Ovary (tissue), 10 donors: ENCODE measurements at regions of chr17 and their contacts with region 1.

Region 1: GRCh38 chr17:2416010-2416734 is 15.3 kb upstream of the MNT start:
- DNase-seq: peak; percentile 84 to 95 (median 95)
- H3K4me3 ChIP-seq: no peak overlapping the region
- H3K27ac ChIP-seq: no peak overlapping the region
- H3K4me1 ChIP-seq: peaks cover 11% of the 10 kb centered on the region
- H3K27me3 ChIP-seq: no peaks in the 10 kb centered on the region
- CTCF ChIP-seq: peak; percentile 93
- EP300 ChIP-seq: no peak
- POLR2A ChIP-seq: no peak

Region 2: GRCh38 chr17:2369551-2370210 is 46.5 kb before region 1 on chr17:
- intact Hi-C with region 1: loop called in 1 of 4 experiments (anchors 10 kb)
- DNase-seq: no peak
- H3K4me3 ChIP-seq: no peak overlapping the region
- H3K27ac ChIP-seq: no peak overlapping the region
- H3K4me1 ChIP-seq: no peaks in the 10 kb centered on the region
- H3K27me3 ChIP-seq: no peaks in the 10 kb centered on the region
- CTCF ChIP-seq: no peak
- EP300 ChIP-seq: no peak
- POLR2A ChIP-seq: no peak

Region 3: GRCh38 chr17:2380226-2380922 is 35.8 kb before region 1 on chr17:
- intact Hi-C with region 1: loop called (anchors 1 to 5 kb)
- DNase-seq: no peak
- H3K4me3 ChIP-seq: no peak overlapping the region
- H3K27ac ChIP-seq: no peak overlapping the region
- H3K4me1 ChIP-seq: peaks cover 8% of the 10 kb centered on the region
- H3K27me3 ChIP-seq: no peaks in the 10 kb centered on the region
- CTCF ChIP-seq: no peak
- EP300 ChIP-seq: no peak
- POLR2A ChIP-seq: no peak

Region 4: DNA sequence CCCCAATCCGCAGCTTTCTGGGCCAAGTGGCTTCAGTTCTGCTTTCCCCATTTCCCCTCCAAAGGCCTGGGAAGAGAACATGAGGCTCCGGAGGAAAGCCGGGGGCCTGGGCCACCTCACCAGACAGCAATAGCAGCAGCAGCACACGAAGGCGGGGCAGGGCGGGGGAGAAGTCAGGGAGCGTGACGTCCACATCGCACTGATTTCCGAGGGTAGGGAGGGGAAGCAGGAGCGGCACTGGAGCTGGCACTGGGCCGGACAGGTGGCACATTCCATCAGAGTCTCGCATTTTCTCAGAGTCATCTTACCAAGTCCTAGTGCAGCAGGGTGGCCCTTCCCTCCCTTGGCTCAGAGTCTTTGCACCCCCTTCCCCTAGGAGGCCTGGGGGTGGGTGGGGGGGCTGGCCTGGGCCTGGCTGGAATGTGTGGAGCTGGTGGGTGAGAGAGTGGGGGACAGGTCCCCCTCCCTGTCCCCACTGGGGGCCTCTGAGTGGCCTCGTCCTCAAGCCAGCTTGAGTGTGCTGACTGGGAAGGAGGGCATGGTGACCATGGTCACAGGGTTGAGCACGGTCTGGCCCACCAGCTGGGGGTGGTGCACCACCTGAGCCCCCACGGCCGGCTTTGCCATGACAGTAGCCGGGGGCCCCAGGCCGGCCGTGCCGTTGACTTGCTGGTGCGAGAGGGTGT is 29.6 kb before region 1 on chr17:
- intact Hi-C with region 1: loop called (anchors 1 to 5 kb)
- DNase-seq: peak in 3 of 5 donors; percentile 35 to 50 (median 48)
- H3K4me3 ChIP-seq: no peak overlapping the region
- H3K27ac ChIP-seq: peak overlapping the region in 1 of 2 donors; percentile 77
- H3K4me1 ChIP-seq: peaks cover 10% of the 10 kb centered on the region
- H3K27me3 ChIP-seq: no peaks in the 10 kb centered on the region
- CTCF ChIP-seq: no peak
- EP300 ChIP-seq: no peak
- POLR2A ChIP-seq: no peak

Region 5: GRCh38 chr17:2592971-2593820 is 177.0 kb after region 1 on chr17 and contains the start of gene PAFAH1B1:
- intact Hi-C with region 1: no loop called
- DNase-seq: peak; percentile 90 to 96 (median 92)
- H3K4me3 ChIP-seq: peak within 1 kb of the TSS; percentile 100
- H3K27ac ChIP-seq: peak within 1 kb of the TSS; percentile 94 to 100
- H3K4me1 ChIP-seq: peaks cover 1% of the 10 kb centered on the region
- H3K27me3 ChIP-seq: no peaks in the 10 kb centered on the region
- CTCF ChIP-seq: peak in 2 of 3 donors; percentile 36 to 38
- EP300 ChIP-seq: no peak
- POLR2A ChIP-seq: peak; percentile 90
- total RNA-seq, gene PAFAH1B1: 73.6 to 125 (median 108) TPM